ENCODE measurements at regions of chr6 and their contacts with region 1.

Region 1: DNA sequence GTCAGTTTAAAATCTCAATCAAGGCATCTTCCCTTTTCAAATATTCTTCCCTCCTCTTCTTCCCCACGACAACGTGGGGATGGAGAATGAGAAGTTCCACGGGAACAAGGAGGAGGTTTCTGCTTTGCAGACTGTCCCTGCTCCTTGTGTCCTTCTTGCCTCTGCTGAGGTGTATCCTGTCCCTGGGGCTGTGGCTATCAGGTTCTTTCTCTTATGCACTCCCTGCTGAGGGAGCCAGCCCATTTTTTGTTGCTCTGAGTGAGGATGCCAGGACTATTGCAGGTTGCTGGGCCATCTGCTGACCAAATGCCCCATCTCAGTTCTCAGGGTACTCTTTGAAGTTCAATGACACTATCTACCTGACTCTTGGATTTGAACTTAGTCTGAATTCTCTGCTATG is 533.6 kb downstream of the RNF144B start:
- DNase-seq: no peak
- H3K4me3 ChIP-seq: no peak overlapping the region
- H3K27ac ChIP-seq: no peak overlapping the region
- H3K4me1 ChIP-seq: no peaks in the 10 kb centered on the region
- H3K27me3 ChIP-seq: no peaks in the 10 kb centered on the region
- CTCF ChIP-seq: no peak
- EP300 ChIP-seq: no peak
- POLR2A ChIP-seq: no peak

Region 2: DNA sequence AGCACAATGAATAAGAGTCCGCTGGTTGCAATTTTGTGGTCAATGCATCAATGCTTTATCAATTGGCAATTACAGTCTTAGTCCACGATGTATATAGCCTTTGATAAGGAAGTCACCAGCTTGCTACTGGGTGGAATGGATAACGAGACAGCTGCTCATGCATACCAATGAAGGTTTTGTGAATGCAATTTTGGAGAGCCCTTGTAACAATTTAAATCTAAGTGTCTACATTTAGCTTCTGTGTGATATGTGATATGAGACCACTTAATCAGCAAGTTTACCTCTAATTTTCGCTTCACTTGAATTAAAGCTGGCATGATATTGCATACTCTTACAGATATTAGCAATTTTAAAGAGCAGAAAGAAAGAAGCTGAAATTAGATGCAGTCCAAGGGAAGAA is 10.4 kb after region 1 on chr6:
- intact Hi-C with region 1: loop called in 1 of 4 experiments (anchors 1 kb)
- DNase-seq: no peak
- H3K4me3 ChIP-seq: no peak overlapping the region
- H3K27ac ChIP-seq: no peak overlapping the region
- H3K4me1 ChIP-seq: no peaks in the 10 kb centered on the region
- H3K27me3 ChIP-seq: no peaks in the 10 kb centered on the region
- CTCF ChIP-seq: no peak
- EP300 ChIP-seq: no peak
- POLR2A ChIP-seq: no peak

Region 3: DNA sequence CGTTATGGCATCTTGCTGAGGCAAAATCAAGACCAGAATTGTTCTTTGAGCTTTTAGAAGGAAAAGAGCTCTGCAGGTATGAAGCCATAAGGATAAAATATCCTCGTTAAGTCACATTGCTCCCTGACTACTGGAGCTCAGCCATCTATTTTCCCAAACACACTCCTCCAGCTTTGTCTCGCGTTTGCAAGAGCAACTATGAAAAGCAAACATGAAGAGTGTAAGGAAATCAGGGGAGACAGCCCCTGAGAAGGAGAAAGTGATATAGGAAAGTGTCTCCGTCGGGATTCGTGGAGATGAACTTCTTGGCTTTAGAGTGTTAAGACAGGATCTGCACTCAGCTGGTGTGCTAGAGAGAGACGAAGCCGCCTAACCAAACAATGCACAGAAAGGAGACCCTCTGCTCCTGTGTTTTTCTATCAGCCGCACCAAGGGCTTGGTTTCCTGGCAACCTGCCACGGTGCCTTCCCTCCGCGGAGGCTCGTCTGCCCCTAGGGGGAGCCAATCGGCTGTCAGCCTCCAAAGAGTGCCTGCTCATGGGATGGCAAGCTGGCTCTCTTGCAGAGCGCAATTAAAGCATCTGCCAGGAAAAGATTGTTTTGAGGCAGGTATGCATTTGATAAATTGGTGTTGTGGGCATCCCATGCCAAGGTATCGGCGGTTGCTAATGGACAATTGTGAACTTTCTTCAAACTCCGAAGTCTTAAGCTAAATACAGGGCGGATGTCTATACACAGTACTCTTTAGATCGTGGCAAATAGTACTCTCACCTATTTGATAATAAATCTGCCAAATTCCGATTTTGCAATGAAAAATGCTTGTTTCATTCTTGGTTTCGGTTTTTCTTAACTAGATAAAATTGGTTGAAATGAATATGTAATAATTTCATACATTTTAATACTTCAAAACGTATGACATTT is 69.6 kb after region 1 on chr6:
- intact Hi-C with region 1: no loop called
- DNase-seq: peak; percentile 43 to 82 (median 74)
- H3K4me3 ChIP-seq: no peak overlapping the region
- H3K27ac ChIP-seq: no peak overlapping the region
- H3K4me1 ChIP-seq: no peaks in the 10 kb centered on the region
- H3K27me3 ChIP-seq: no peaks in the 10 kb centered on the region
- CTCF ChIP-seq: peak in 2 of 3 donors; percentile 18 to 36
- EP300 ChIP-seq: no peak
- POLR2A ChIP-seq: no peak

Measured in ovary (tissue), 10 donors.